Cardiac septum (tissue), 1 donor: ENCODE measurements at regions of chr1 and their contacts with region 1.

Region 1: DNA sequence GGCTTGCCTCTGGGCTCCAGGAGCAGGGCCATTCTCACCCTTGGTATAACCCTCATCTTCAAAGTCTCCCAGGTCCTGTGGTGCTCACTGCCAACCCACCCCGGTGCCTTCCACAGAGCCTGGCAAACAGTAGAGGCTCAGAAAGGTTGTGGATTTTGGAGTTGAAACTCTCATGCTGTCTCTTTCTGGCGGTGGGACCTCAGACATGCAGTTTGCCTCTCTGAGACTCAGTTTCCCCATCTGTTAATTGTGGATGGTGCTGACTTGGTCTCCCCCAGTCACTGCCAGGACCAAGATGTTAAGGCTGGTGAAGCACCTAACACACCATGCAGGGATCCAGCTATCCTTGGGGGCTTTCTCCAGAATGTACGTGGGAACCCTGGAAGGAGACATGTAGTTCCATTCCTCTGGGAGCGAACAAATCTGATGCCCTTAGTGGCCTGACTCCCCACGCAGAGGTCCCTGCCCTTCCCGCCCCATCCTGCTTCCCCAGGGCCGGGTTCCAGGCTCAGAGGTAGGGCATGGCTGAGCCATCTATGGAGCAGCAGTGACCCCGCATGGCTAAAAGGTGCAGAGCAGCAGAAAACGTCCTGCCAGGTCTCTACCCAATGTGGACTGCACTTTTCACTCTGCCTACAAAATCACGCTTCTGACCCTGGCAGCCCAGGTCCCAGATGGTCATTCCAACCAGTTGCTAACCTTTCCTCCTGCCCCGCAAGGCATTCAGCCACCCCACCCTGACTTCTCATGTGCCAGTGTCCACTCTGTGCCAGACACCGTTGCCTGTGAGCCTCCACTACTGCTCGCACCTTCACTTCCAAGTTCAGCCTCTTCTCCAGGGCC is 9.2 kb upstream of the TTC22 start:
- DNase-seq: no peak

Region 2: DNA sequence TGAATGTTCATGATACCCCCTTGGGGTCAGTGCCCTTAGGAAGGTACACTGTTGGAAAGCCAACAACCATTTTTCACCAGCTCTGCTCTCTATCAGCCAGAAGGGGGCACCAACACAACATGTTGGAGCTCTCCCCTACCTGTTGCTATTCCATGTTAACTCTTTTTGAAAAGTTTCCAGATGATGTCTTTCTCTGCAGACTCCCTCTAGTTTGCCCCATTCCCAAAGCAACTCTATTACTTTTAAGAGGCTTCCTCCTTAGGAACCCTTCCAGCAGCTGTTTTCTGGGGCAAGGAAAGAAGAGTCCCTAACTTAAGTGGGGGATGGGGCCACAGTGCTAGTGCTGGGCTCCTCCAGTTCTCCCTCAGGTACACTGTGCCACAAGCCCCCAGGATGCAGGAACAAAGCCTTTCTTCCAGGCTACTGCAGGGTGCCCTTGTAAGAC is 949.3 kb before region 1 on chr1:
- intact Hi-C with region 1: loop called (anchors 2 kb)
- DNase-seq: no peak

Region 3: DNA sequence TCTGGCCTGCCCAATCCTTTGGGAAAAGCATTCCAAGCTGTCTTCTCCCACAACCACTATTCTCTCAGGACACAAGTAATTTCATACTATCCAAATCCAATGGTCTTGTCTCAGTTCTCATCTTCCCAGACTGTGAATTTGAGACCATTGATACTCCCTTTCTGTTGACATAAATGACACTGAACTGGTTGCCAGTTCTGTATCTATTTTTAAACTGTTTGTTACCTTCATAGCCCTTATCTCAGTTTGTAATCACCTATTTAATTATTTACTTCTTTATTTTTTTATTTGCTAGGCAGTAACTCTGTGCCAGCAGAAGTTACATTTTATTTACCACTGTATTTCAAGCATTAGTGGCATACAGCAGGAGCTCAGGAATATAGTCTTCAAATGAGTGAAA is 733.0 kb before region 1 on chr1:
- intact Hi-C with region 1: loop called (anchors 5 kb)
- DNase-seq: no peak